ENCODE measurements at regions of chr5 and their contacts with region 1.

Region 1: GRCh38 chr5:60586307-60586901 is 113.6 kb downstream of the DEPDC1B start:
- DNase-seq: no peak
- ATAC-seq: peak; percentile 38; the same call in 2 of the 3 replicates
- H3K4me3 ChIP-seq: no peak overlapping the region
- H3K27ac ChIP-seq: no peak overlapping the region
- H3K4me1 ChIP-seq: peaks cover 8% of the 10 kb centered on the region; the same call in 1 of the 2 replicates
- H3K27me3 ChIP-seq: no peaks in the 10 kb centered on the region
- CTCF ChIP-seq: peak; percentile 32 to 55 (median 53); a peak in 5 of 6 replicates
- EP300 ChIP-seq: no peak
- POLR2A ChIP-seq: no peak
- RAD21 ChIP-seq: peak; percentile 78

Region 2: DNA sequence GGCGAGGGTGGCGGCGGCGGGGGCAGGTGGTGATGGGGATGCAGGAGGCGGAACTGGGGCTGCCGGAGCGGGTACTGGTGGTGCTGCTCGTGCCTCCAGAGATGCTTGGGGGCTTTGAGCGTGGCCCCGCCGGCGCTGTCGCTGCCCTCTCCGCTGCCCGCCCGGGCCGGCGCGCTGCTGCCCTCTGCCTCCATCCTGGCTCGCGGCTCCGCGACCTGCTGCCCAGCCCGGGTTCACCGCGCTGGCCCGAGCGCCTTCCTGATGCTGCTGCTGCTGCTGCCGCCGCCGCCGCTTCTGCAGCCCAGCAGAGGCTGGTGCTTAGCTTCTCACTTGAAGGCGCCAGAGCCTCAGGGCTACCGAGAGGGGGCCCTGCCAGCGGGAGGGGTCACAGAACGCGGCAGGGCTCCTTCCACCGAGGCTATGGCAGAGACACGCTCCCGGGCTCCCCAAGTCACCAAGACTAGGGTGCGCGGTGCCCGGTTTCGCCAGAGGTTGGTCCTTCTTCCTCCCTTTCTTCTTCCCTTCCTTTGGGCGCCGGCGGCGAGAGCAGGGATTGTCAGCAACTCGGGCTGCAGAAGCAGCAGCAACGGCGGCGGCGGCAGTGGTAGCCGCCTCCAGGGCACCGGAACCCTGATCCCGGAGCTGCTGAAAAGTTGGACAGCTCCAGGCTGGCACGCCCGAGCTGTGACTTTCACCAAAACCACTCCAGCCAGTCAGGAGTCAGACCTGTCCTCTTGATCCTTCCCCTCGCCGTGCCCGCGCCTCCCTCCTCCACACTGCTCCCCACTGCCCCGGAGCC is 692.8 kb before region 1 on chr5 and contains the start of gene PDE4D:
- CTCF ChIA-PET with region 1: no interaction called
- POLR2A ChIA-PET with region 1: no interaction called
- RAD21 ChIA-PET with region 1: no interaction called
- SMC1A ChIA-PET with region 1: no interaction called
- in situ Hi-C with region 1: no loop called
- intact Hi-C with region 1: no loop called
- DNase-seq: no peak
- ATAC-seq: peak; percentile 48
- H3K4me3 ChIP-seq: no peak within 1 kb of the TSS
- H3K27ac ChIP-seq: no peak within 1 kb of the TSS
- H3K4me1 ChIP-seq: no peaks in the 10 kb centered on the region
- H3K27me3 ChIP-seq: peaks cover 0 to 8% of the 10 kb centered on the region in 2 experiments; a peak in 2 of 4 replicates
- CTCF ChIP-seq: no peak
- EP300 ChIP-seq: no peak
- POLR2A ChIP-seq: no peak
- RAD21 ChIP-seq: no peak
- polyA plus RNA-seq, gene PDE4D: 1.3 to 2.7 TPM

Region 3: GRCh38 chr5:60540856-60541805 is 45.3 kb before region 1 on chr5:
- CTCF ChIA-PET with region 1: interaction called, 6 read pairs
- POLR2A ChIA-PET with region 1: no interaction called
- RAD21 ChIA-PET with region 1: interaction called, 24 read pairs
- SMC1A ChIA-PET with region 1: interaction called, 4 read pairs
- in situ Hi-C with region 1: no loop called
- intact Hi-C with region 1: loop called (anchors 5 kb)
- DNase-seq: peak; percentile 90
- ATAC-seq: peak; percentile 96
- H3K4me3 ChIP-seq: peak overlapping the region; percentile 18; the same call in 1 of the 2 replicates
- H3K27ac ChIP-seq: peak overlapping the region; percentile 59
- H3K4me1 ChIP-seq: peaks cover 22% of the 10 kb centered on the region
- H3K27me3 ChIP-seq: no peaks in the 10 kb centered on the region
- CTCF ChIP-seq: peak in 1 of 3 experiments; percentile 33; a peak in 2 of 6 replicates
- EP300 ChIP-seq: peak; percentile 82 to 97
- POLR2A ChIP-seq: no peak
- RAD21 ChIP-seq: peak; percentile 34

Region 4: GRCh38 chr5:60551250-60551649 is 35.2 kb before region 1 on chr5:
- CTCF ChIA-PET with region 1: no interaction called
- POLR2A ChIA-PET with region 1: no interaction called
- RAD21 ChIA-PET with region 1: no interaction called
- SMC1A ChIA-PET with region 1: no interaction called
- in situ Hi-C with region 1: no loop called
- intact Hi-C with region 1: no loop called
- DNase-seq: no peak
- ATAC-seq: no peak
- H3K4me3 ChIP-seq: no peak overlapping the region
- H3K27ac ChIP-seq: no peak overlapping the region
- H3K4me1 ChIP-seq: no peaks in the 10 kb centered on the region; the same call in 1 of the 2 replicates
- H3K27me3 ChIP-seq: no peaks in the 10 kb centered on the region
- CTCF ChIP-seq: no peak
- EP300 ChIP-seq: no peak
- POLR2A ChIP-seq: no peak
- RAD21 ChIP-seq: no peak

Region 5: GRCh38 chr5:60597572-60598320 is 11.3 kb after region 1 on chr5:
- CTCF ChIA-PET with region 1: interaction called, 5 read pairs
- POLR2A ChIA-PET with region 1: no interaction called
- RAD21 ChIA-PET with region 1: interaction called, 7 read pairs
- SMC1A ChIA-PET with region 1: interaction called, 11 read pairs
- in situ Hi-C with region 1: no loop called
- intact Hi-C with region 1: no loop called
- DNase-seq: peak; percentile 60
- ATAC-seq: peak; percentile 85
- H3K4me3 ChIP-seq: 0 out of 2 replicates have a peak overlapping the region, but pooled peaks have one; percentile 18
- H3K27ac ChIP-seq: peak overlapping the region; percentile 65
- H3K4me1 ChIP-seq: peaks cover 26% of the 10 kb centered on the region
- H3K27me3 ChIP-seq: no peaks in the 10 kb centered on the region
- CTCF ChIP-seq: no peak
- EP300 ChIP-seq: peak; percentile 49 to 77; a peak in 3 of 4 replicates
- POLR2A ChIP-seq: no peak
- RAD21 ChIP-seq: 0 out of 2 replicates have a peak, but pooled peaks have one; percentile 7

Measured in GM12878 (cell line).